ENCODE measurements at regions of chr20 and their contacts with region 1.

Region 1: DNA sequence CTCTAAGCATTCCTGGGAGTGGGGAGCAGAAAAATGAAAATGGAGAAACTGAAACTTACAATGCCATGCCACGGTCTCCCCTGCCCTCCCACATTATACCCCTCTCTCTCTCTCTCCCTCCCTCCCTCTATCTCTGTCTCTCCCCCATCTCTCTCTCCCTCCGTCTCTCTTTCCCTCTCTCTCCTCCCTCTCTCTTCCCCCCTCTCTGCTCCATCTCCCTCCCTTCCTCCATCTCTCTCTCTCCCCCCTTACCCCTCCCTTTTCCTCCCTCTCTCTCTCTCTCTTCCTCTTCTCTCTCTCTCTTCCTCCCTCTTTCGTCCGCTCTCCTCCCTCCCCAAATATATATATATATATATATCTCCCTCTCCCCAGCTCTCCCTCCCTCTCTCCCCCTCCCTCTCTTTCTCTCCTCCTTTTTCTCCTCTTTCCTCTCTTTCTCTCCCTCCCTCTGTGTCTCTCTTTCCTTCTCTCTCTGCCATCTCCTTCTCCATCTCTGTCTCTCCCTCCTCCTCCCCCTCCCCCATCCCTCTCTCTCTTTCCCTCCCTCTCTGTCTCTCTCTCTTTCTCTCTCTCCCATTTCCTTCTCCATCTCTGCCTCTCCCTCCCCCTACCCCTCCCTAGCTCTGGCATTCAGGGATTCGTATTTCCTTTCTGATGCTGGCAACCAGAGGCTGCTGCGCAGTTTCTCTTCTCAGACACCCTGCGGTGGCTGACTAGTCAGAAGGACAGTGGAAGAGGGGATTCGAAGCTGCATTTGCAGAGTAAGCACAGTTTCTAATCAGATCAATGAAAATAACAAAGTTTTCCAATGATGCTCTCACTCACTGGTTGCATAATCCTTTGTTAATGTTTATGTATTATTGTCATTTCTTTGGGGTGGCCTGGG is 13.9 kb upstream of the VAPB start:
- DNase-seq: no peak
- H3K4me3 ChIP-seq: no peak overlapping the region
- H3K27ac ChIP-seq: no peak overlapping the region
- H3K27me3 ChIP-seq: no peaks in the 10 kb centered on the region
- CTCF ChIP-seq: no peak

Region 2: GRCh38 chr20:58141971-58142781 is 233.0 kb before region 1 on chr20:
- CTCF ChIA-PET with region 1: no interaction called
- POLR2A ChIA-PET with region 1: no interaction called
- DNase-seq: no peak
- H3K4me3 ChIP-seq: no peak overlapping the region
- H3K27ac ChIP-seq: no peak overlapping the region
- H3K27me3 ChIP-seq: peaks cover 10% of the 10 kb centered on the region
- CTCF ChIP-seq: no peak

Region 3: GRCh38 chr20:58267389-58268215 is 107.5 kb before region 1 on chr20:
- CTCF ChIA-PET with region 1: no interaction called
- POLR2A ChIA-PET with region 1: interaction called, 10 read pairs
- DNase-seq: no peak
- H3K4me3 ChIP-seq: no peak overlapping the region
- H3K27ac ChIP-seq: no peak overlapping the region
- H3K27me3 ChIP-seq: no peaks in the 10 kb centered on the region
- CTCF ChIP-seq: no peak

Region 4: DNA sequence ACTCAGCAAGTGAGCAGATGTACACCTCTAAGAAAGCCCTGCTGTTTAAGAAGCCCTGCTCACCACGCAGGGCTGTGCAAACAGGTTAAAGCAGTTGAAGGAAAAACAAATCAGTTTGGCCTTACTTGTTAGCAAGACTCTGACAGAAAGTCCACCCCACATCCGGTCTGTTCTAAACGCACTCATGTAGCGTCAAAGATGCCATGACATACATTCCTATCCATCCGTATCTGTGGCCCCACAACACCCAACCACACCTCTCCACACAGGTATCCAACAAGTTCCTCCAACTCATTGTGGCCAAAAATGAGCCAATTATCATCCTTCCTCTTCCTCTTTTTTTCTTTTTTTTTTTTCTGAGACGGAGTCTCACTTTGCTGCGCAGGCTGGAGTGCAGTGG is 88.4 kb before region 1 on chr20:
- CTCF ChIA-PET with region 1: no interaction called
- POLR2A ChIA-PET with region 1: no interaction called
- DNase-seq: no peak
- H3K4me3 ChIP-seq: no peak overlapping the region
- H3K27ac ChIP-seq: no peak overlapping the region
- H3K27me3 ChIP-seq: no peaks in the 10 kb centered on the region
- CTCF ChIP-seq: no peak